Right cardiac atrium (tissue), 5 donors: ENCODE measurements at regions of chr4 and their contacts with region 1.

Region 1: DNA sequence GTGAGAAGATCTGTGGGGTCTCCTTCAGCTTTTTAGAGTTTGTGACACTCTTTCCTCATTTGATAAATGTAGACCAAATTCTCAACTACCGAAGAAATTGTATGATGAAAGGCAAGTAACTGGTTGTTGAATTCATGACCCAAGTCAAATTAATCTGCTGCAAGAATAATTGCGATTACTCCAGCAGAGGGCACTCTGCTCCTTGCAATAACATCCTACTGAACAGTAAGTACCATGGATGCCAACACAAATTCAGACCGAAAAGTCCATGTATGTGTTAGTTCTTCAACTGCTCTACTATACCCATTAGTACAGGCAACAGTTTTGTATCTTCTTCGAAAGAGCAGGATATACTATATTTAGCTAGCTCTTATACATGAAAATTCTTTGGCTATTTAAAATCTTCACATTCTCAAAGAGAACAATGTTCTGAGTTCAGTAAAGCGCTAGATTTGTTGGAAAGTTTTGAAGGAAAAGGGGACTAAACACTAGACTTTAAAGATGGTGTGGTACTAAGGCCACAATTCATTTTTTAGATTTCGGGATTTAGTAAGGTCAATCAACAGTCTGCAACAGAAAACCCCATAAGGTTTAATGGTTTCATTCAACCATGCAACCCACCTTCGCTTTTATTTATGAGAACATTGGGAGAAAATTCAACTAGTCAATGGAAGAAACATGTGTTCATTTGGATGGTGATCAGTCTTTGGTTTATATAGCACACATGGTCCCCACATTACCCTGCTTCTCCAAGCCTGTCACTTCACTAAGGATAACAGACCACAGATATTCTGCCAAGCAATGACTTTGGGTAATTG is 105.4 kb upstream of the TBC1D9 start:
- DNase-seq: peak in 2 of 3 donors; percentile 26 to 61
- ATAC-seq: peak; percentile 68 to 76
- H3K4me3 ChIP-seq: no peak overlapping the region
- H3K27ac ChIP-seq: no peak overlapping the region
- H3K4me1 ChIP-seq: no peaks in the 10 kb centered on the region
- H3K27me3 ChIP-seq: no peaks in the 10 kb centered on the region

Region 2: GRCh38 chr4:140884431-140885058 is 23.0 kb after region 1 on chr4:
- intact Hi-C with region 1: loop called in 1 of 4 experiments (anchors 2 kb)
- DNase-seq: peak in 2 of 3 donors; percentile 35 to 44
- ATAC-seq: peak; percentile 76 to 78
- H3K4me3 ChIP-seq: no peak overlapping the region
- H3K27ac ChIP-seq: no peak overlapping the region
- H3K4me1 ChIP-seq: no peaks in the 10 kb centered on the region
- H3K27me3 ChIP-seq: no peaks in the 10 kb centered on the region

Region 3: GRCh38 chr4:141102367-141102766 is 240.8 kb after region 1 on chr4:
- intact Hi-C with region 1: no loop called
- DNase-seq: no peak
- ATAC-seq: peak; percentile 14 to 54
- H3K4me3 ChIP-seq: no peak overlapping the region
- H3K27ac ChIP-seq: peak overlapping the region; percentile 2
- H3K4me1 ChIP-seq: peaks cover 1% of the 10 kb centered on the region
- H3K27me3 ChIP-seq: no peaks in the 10 kb centered on the region